Activated B cell treated with CpG ODN at 0.5 μM for 24 hours (primary cell): ENCODE measurements at regions of chr17 and their contacts with region 1.

Region 1: DNA sequence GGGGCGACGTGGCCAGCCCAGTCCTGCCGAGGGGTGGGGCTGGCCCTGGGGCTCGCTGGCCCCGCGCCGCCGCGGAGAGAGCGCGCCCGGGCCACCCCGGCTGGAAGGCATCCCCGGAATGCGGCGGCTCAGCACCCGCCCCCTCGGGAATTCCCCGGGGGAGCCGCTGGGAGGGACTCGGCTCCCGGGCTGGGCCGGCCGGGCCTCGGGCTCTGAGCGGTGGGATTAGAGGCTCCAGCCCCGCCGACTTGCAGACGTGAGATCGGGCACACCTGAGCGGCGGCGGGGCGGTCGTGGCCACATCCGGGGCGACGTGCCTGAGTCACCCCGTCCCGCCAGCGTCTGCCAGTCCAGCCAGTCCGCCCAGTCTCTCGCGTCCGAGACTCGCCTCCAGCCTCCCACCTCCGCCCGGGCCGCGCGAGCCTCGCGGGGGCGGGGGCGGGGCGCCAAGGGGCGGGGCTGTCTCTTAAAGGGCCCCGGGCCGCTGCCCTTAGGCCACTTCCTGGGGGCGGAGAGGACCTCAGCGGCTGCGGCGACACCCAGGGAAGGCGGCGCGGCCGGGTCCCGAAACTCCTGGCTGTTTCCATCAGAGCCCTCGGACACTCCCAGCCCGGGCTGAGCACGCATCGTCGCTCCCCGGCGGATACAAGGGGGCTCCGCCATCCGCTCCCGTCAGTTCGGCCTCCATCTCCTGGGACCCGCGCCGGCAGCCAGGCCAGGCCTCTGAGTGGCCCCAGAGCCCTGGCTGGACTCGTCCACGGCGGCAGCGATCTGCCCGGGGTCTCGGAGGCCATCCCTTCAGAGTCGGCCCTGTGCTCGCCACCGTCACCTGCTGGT is at the start of gene KCTD11:
- DNase-seq: peak; percentile 78
- ATAC-seq: peak; percentile 63
- H3K4me3 Mint-ChIP-seq: peak within 1 kb of the TSS; percentile 87
- H3K27ac Mint-ChIP-seq: peak within 1 kb of the TSS; percentile 87
- H3K4me1 Mint-ChIP-seq: peaks cover 42% of the 10 kb centered on the region
- H3K27me3 Mint-ChIP-seq: no peaks in the 10 kb centered on the region
- CTCF ChIP-seq: no peak
- total RNA-seq, gene KCTD11: 7.2 and 7.8 TPM in 2 replicates

Region 2: GRCh38 chr17:7045909-7046724 is 305.8 kb before region 1 on chr17:
- CTCF ChIA-PET with region 1: interaction called, 4 read pairs
- POLR2A ChIA-PET with region 1: interaction called, 3 read pairs
- intact Hi-C with region 1: loop called (anchors 1 kb)
- DNase-seq: peak; percentile 30
- ATAC-seq: peak; percentile 11
- H3K4me3 Mint-ChIP-seq: peak overlapping the region; percentile 81
- H3K27ac Mint-ChIP-seq: peak overlapping the region; percentile 86
- H3K4me1 Mint-ChIP-seq: peaks cover 45% of the 10 kb centered on the region
- H3K27me3 Mint-ChIP-seq: no peaks in the 10 kb centered on the region
- CTCF ChIP-seq: no peak

Region 3: DNA sequence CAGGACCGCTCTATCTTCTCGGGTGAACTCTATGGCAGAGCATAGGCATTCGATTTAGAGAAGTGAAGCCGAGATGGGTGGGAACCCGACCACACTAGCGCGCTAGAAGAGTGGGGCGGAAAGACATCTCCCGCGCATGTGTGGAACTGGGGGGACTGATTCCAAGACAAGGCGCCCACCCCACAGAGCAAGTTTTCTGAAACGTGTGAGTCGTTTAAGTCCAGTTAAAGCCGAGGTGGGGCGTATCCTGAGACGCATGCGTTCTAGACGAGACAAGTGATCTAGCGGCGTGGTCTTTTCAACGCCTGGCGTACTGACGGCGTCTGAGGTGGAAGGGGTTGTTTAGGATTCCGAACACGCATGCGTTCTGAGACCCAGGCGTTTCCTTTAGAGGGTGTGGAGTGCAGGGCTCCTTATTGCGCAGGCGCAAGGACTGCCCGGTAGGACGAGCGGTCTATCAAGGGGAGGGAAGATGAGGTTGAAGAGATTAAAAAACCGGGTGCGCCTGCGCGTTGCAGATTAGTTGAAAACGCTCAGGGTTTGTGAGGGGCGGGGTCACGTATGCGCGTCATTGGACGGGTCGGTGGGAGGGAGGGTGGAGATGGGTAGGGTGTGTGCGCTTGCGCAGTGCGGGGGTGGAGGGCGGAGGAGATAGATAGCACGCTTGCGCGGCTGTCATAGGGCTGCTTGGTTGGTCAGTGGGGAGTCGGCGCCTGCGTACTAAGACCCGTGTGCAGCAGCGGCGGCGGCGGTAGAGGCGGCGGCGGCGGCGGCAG is 44.8 kb before region 1 on chr17 and contains the start of gene EIF5A:
- CTCF ChIA-PET with region 1: interaction called, 4 read pairs
- POLR2A ChIA-PET with region 1: interaction called, 10 read pairs
- intact Hi-C with region 1: loop called (anchors 2 kb)
- DNase-seq: peak; percentile 98
- ATAC-seq: peak; percentile 72
- H3K4me3 Mint-ChIP-seq: peak within 1 kb of the TSS; percentile 96
- H3K27ac Mint-ChIP-seq: peak within 1 kb of the TSS; percentile 99
- H3K4me1 Mint-ChIP-seq: peaks cover 38% of the 10 kb centered on the region
- H3K27me3 Mint-ChIP-seq: no peaks in the 10 kb centered on the region
- CTCF ChIP-seq: no peak
- total RNA-seq, gene EIF5A: 656 and 664 TPM in 2 replicates

Region 4: DNA sequence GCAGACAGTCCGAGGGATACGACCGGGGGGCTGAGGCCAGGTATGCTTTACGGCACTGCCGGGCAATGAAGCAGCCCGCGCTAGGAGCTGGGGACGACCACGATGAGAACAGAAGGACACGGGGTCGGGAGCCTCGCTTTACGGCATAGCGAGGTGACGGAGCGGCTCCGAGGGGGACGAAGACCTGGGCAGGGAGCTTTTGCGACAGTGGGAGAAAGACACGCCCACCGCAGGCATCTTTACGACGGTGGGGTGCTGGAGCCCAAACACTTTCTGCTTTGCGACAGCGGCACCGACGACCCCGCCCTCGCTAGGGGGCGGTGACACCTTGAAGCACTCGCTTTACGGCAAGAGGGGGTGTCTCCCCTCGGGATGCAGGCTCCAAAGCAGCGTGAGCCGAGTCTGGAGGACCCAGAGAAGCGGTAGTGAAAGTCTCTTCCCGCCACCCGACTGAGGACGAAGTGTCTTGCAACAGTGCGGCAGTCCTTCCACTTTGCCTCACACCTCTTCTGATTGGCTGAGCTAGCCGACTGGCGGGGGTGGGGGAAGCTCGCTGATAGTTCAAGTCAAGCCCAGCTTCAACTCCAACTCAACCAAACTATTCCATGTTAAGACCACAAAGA is 22.4 kb before region 1 on chr17:
- CTCF ChIA-PET with region 1: interaction called, 21 read pairs
- POLR2A ChIA-PET with region 1: interaction called, 28 read pairs
- intact Hi-C with region 1: loop called (anchors 1 kb)
- DNase-seq: peak; percentile 92
- ATAC-seq: peak; percentile 74
- H3K4me3 Mint-ChIP-seq: peak overlapping the region; percentile 95
- H3K27ac Mint-ChIP-seq: peak overlapping the region; percentile 96
- H3K4me1 Mint-ChIP-seq: peaks cover 41% of the 10 kb centered on the region
- H3K27me3 Mint-ChIP-seq: no peaks in the 10 kb centered on the region
- CTCF ChIP-seq: no peak

Region 5: DNA sequence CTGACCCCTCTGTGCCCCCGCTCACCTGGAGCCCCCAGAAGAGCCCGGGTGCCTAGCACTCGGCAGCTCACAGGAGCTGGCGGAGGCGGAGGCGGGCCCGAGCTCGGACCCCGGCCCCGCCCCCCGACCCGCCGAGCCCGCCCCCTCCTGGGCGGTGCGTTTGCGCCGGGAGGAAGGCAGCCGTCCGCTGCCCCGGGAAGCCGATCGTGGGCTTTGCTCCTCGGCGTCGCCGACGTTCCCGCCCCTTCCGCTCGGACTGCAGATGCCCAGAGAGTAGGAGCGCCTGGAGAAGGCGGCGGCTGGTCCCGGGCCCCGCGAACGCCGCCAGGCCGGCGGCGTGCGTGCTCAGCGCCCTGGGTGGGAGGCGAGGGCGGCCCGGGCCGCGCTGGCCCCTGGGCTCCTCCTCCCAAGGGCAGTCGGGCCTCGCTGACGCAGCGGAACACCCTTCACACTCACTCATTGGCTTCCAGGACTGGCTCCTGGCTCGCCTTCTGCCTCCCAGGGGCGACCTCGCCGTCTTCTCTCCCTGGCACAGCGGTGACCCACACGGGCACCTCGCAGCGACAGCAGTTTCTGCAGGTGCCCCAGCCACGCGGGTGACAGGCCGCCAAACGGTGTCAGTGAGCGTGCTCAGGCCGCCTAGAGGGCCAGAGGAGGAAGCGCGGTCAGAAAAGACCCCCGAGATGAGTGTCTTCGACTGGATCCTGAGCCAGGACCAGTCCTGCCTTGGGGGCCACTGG is 42.7 kb after region 1 on chr17 and contains the start of gene PLSCR3:
- CTCF ChIA-PET with region 1: no interaction called
- POLR2A ChIA-PET with region 1: interaction called, 3 read pairs
- intact Hi-C with region 1: loop called (anchors 1 kb)
- DNase-seq: peak; percentile 94
- ATAC-seq: peak; percentile 88
- H3K4me3 Mint-ChIP-seq: peak within 1 kb of the TSS; percentile 91
- H3K27ac Mint-ChIP-seq: peak within 1 kb of the TSS; percentile 85
- H3K4me1 Mint-ChIP-seq: peaks cover 15% of the 10 kb centered on the region
- H3K27me3 Mint-ChIP-seq: no peaks in the 10 kb centered on the region
- CTCF ChIP-seq: no peak
- total RNA-seq, gene PLSCR3: 31.7 and 35.2 TPM in 2 replicates

Region 6: DNA sequence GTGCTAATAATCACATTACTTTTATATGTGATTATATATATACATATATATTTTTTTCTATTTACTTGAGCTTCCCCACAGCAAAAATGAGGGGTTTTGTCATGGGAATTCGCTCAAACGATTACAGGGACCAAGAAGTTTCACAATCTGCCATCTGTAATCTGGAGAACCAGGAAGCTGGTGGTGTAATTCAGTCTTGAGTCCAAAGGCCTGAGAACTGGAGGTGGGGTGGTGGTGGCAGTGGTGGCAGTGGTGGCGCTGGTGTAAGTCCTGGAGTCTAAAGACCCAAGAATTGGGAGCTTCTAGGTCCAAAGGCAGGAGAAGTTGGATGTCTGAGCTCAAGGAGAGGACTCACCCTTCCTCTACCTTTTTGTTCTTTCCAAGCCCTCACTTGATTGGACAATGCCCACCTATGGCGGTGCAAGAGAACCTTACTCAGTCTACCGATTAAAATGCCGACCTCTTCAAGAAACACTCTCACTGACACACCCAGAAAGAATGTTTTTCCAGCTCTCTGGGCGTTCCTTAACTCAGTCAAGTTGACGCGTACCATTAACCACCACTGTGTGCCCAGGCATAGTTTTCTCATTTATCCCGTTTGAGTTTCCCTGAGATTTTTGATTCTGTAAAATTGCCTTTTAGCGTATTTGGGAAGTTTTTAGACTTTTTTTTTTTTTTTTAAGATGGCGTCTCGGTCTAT is 164.2 kb after region 1 on chr17:
- CTCF ChIA-PET with region 1: interaction called, 16 read pairs
- POLR2A ChIA-PET with region 1: no interaction called
- intact Hi-C with region 1: loop called (anchors 2 kb)
- DNase-seq: no peak
- ATAC-seq: no peak
- H3K4me3 Mint-ChIP-seq: no peak overlapping the region
- H3K27ac Mint-ChIP-seq: peak overlapping the region; percentile 35
- H3K4me1 Mint-ChIP-seq: no peaks in the 10 kb centered on the region
- H3K27me3 Mint-ChIP-seq: no peaks in the 10 kb centered on the region
- CTCF ChIP-seq: no peak

Region 7: GRCh38 chr17:7538891-7539290 is 187.0 kb after region 1 on chr17:
- CTCF ChIA-PET with region 1: no interaction called
- POLR2A ChIA-PET with region 1: no interaction called
- intact Hi-C with region 1: no loop called
- DNase-seq: no peak
- ATAC-seq: no peak
- H3K4me3 Mint-ChIP-seq: no peak overlapping the region
- H3K27ac Mint-ChIP-seq: no peak overlapping the region
- H3K4me1 Mint-ChIP-seq: no peaks in the 10 kb centered on the region
- H3K27me3 Mint-ChIP-seq: no peaks in the 10 kb centered on the region
- CTCF ChIP-seq: no peak